ENCODE measurements at regions of chr5 and their contacts with region 1.

Region 1: GRCh38 chr5:119070828-119071572 is at the start of gene DMXL1:
- DNase-seq: peak; percentile 97 to 99 (median 98)
- H3K4me3 ChIP-seq: peak within 1 kb of the TSS; percentile 63 to 95
- H3K4me3 Mint-ChIP-seq: peak within 1 kb of the TSS; percentile 92 to 99 (median 99)
- H3K27ac ChIP-seq: peak within 1 kb of the TSS; percentile 86
- H3K27ac Mint-ChIP-seq: peak within 1 kb of the TSS; percentile 99 to 100 (median 99)
- H3K4me1 ChIP-seq: peaks cover 48% of the 10 kb centered on the region
- H3K4me1 Mint-ChIP-seq: peaks cover 21 to 46% (median 29%) of the 10 kb centered on the region in 4 donors
- H3K27me3 ChIP-seq: no peaks in the 10 kb centered on the region
- H3K27me3 Mint-ChIP-seq: peaks cover 0 to 2% of the 10 kb centered on the region in 2 donors
- total RNA-seq, gene DMXL1: 33.2 to 37.9 TPM

Region 2: GRCh38 chr5:119274767-119275130 is 203.7 kb after region 1 on chr5:
- CTCF ChIA-PET with region 1: interaction called, 3 read pairs
- POLR2A ChIA-PET with region 1: interaction called, 14 read pairs
- intact Hi-C with region 1: no loop called
- DNase-seq: peak in 1 of 5 donors; percentile 84
- H3K4me3 ChIP-seq: peak overlapping the region in 1 of 2 donors; percentile 74
- H3K4me3 Mint-ChIP-seq: peak overlapping the region; percentile 82 to 100 (median 100)
- H3K27ac ChIP-seq: peak overlapping the region; percentile 71
- H3K27ac Mint-ChIP-seq: peak overlapping the region; percentile 90 to 99 (median 96)
- H3K4me1 ChIP-seq: peaks cover 89% of the 10 kb centered on the region
- H3K4me1 Mint-ChIP-seq: peaks cover 76 to 99% (median 85%) of the 10 kb centered on the region in 4 donors
- H3K27me3 ChIP-seq: no peaks in the 10 kb centered on the region
- H3K27me3 Mint-ChIP-seq: peaks cover 0 to 2% of the 10 kb centered on the region in 2 donors

Region 3: GRCh38 chr5:119309326-119309725 is 238.3 kb after region 1 on chr5:
- CTCF ChIA-PET with region 1: no interaction called
- POLR2A ChIA-PET with region 1: interaction called, 4 read pairs
- intact Hi-C with region 1: loop called (anchors 2 kb)
- DNase-seq: peak in 1 of 5 donors; percentile 41
- H3K4me3 ChIP-seq: no peak overlapping the region
- H3K4me3 Mint-ChIP-seq: peak overlapping the region; percentile 68 to 93 (median 78)
- H3K27ac ChIP-seq: peak overlapping the region; percentile 52
- H3K27ac Mint-ChIP-seq: peak overlapping the region; percentile 94 to 99 (median 98)
- H3K4me1 ChIP-seq: peaks cover 100% of the 10 kb centered on the region
- H3K4me1 Mint-ChIP-seq: peaks cover 70 to 97% (median 82%) of the 10 kb centered on the region in 4 donors
- H3K27me3 ChIP-seq: no peaks in the 10 kb centered on the region
- H3K27me3 Mint-ChIP-seq: no peaks in the 10 kb centered on the region

Region 4: GRCh38 chr5:119340597-119341218 is 269.7 kb after region 1 on chr5:
- CTCF ChIA-PET with region 1: interaction called, 6 read pairs
- POLR2A ChIA-PET with region 1: interaction called, 10 read pairs
- intact Hi-C with region 1: no loop called
- DNase-seq: peak; percentile 71 to 85 (median 77)
- H3K4me3 ChIP-seq: peak overlapping the region; percentile 40 to 63
- H3K4me3 Mint-ChIP-seq: peak overlapping the region; percentile 80 to 89 (median 86)
- H3K27ac ChIP-seq: peak overlapping the region; percentile 75
- H3K27ac Mint-ChIP-seq: peak overlapping the region; percentile 89 to 97 (median 92)
- H3K4me1 ChIP-seq: peaks cover 99% of the 10 kb centered on the region
- H3K4me1 Mint-ChIP-seq: peaks cover 81 to 97% (median 89%) of the 10 kb centered on the region in 4 donors
- H3K27me3 ChIP-seq: no peaks in the 10 kb centered on the region
- H3K27me3 Mint-ChIP-seq: no peaks in the 10 kb centered on the region

Region 5: GRCh38 chr5:119355685-119356611 is 284.9 kb after region 1 on chr5 and contains the start of gene TNFAIP8:
- CTCF ChIA-PET with region 1: no interaction called
- POLR2A ChIA-PET with region 1: interaction called, 11 read pairs
- intact Hi-C with region 1: no loop called
- DNase-seq: peak in 2 of 5 donors; percentile 12 to 75
- H3K4me3 ChIP-seq: peak within 1 kb of the TSS; percentile 51 to 55
- H3K4me3 Mint-ChIP-seq: peak within 1 kb of the TSS; percentile 82 to 97 (median 90)
- H3K27ac ChIP-seq: peak within 1 kb of the TSS; percentile 78
- H3K27ac Mint-ChIP-seq: peak within 1 kb of the TSS; percentile 86 to 97 (median 93)
- H3K4me1 ChIP-seq: peaks cover 93% of the 10 kb centered on the region
- H3K4me1 Mint-ChIP-seq: peaks cover 75 to 95% (median 86%) of the 10 kb centered on the region in 4 donors
- H3K27me3 ChIP-seq: no peaks in the 10 kb centered on the region
- H3K27me3 Mint-ChIP-seq: no peaks in the 10 kb centered on the region
- total RNA-seq, gene TNFAIP8: 167 to 176 TPM

Region 6: DNA sequence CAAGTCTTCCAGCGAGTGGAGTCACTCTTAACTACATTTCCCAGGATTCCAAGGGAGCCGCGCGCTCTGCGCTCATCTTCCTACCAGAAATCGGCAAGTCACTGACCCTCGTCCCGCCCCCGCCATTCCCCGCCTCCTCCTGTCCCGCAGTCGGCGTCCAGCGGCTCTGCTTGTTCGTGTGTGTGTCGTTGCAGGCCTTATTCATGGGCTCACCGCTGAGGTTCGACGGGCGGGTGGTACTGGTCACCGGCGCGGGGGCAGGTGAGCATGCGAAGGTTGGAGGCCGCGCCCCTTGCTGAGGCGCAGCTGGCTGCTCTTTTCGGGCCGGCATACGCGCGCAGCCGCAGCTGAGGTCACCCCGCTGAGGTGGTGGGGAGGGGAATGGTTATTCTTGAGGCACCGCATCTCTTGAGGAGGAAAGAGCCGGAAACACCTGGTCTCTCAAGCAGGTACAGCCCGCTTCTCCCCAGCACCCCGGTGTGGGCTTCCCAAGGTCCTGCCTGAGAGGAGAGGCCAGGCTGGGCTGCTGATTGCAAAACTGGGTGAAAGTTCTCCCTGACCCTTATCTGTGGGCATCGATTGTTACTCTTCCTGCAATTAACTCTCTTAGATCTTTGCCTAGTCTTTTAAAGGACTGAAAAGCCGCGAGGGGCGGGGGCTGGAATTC is 381.5 kb after region 1 on chr5 and contains the start of gene HSD17B4:
- CTCF ChIA-PET with region 1: interaction called, 4 read pairs
- POLR2A ChIA-PET with region 1: interaction called, 8 read pairs
- intact Hi-C with region 1: loop called (anchors 1 kb)
- DNase-seq: peak; percentile 82 to 86 (median 85)
- H3K4me3 ChIP-seq: peak within 1 kb of the TSS; percentile 74 to 84
- H3K4me3 Mint-ChIP-seq: peak within 1 kb of the TSS; percentile 92 to 98 (median 95)
- H3K27ac ChIP-seq: peak within 1 kb of the TSS; percentile 72
- H3K27ac Mint-ChIP-seq: peak within 1 kb of the TSS; percentile 83 to 95 (median 92)
- H3K4me1 ChIP-seq: peaks cover 17% of the 10 kb centered on the region
- H3K4me1 Mint-ChIP-seq: peaks cover 11 to 25% (median 17%) of the 10 kb centered on the region in 4 donors
- H3K27me3 ChIP-seq: no peaks in the 10 kb centered on the region
- H3K27me3 Mint-ChIP-seq: peaks cover 0 to 2% of the 10 kb centered on the region in 2 donors
- total RNA-seq, gene HSD17B4: 60.2 to 79.1 TPM

Measured in CD4-positive, alpha-beta memory T cell (primary cell).